Activated T-helper 2 cell treated with anti-CD3 and anti-CD28 coated beads, Interferon-gamma antibody, Interleukin-2, Interleukin-4, amounts not matched to agents 10 μg/mL and 5 μg/mL and 100 μg/mL, durations not matched to agents 14 hours and 24 hours and 36 hours (primary cell): ENCODE measurements at regions of chr16 and their contacts with region 1.

Region 1: DNA sequence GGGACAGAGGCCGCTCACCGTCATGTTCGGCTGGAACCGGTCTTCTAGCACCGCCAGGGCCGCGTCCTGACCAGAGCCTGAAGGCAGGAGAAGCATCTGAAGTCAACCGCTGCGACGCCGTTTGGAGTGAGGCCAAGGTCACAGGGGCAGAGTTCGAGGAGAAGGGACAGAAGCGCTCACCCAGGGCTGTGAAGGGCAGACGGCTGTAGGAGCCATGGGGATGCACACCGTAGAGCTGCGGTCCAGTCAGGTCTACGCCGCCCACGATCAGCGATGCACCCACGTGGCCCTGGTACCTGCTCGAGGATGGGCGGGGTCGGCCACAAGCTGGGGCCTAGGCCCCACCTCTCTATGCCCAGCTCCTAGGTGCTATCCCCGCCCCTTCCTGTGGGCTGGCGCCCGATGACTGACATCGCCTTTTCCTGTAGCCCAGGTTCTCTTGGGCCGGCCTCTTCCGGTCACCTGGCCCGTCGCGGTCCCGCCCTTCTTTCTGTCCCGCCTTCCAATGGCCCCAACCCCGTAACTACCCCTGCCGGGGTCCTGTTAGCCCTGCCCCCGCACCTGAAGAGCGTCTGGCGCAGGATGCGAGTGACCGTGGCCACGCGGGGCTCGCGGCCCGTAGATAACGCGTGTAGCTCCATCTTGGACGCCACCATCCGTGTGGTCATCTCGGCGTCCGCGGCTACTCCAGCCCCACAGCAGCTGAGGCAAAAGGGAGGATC is 1.1 kb downstream of the PSMB10 start:
- DNase-seq: peak; percentile 92
- H3K4me3 Mint-ChIP-seq: peak overlapping the region; percentile 100
- H3K27ac Mint-ChIP-seq: peak overlapping the region; percentile 90
- H3K4me1 Mint-ChIP-seq: peaks cover 26% of the 10 kb centered on the region
- H3K27me3 Mint-ChIP-seq: no peaks in the 10 kb centered on the region

Region 2: DNA sequence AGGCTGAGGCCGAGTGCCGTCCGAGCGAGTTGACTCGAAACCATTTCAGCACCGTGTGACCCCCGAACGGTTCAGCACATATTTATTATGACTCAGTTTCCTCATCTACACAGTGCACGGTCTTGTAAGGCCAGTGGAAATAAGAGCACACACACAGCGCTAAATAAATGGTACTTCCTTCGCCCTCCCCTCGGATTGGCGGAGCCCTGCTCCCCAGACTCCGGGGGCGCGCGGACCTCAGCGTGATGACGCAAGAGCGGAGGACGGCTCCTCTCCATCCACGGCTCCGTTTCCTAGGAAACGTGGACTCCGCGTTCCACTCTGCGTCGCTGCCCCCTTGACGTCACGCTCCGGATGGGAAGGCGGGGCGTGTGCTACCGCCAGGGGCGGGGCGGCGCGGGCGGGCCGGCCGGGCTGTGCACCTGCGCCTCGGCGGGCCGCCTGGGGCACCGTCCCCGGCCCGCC is 275.0 kb before region 1 on chr16 and contains the start of gene PARD6A:
- intact Hi-C with region 1: loop called (anchors 1 kb)
- DNase-seq: peak; percentile 95
- H3K4me3 Mint-ChIP-seq: peak within 1 kb of the TSS; percentile 92
- H3K27ac Mint-ChIP-seq: peak within 1 kb of the TSS; percentile 96
- H3K4me1 Mint-ChIP-seq: peaks cover 15% of the 10 kb centered on the region
- H3K27me3 Mint-ChIP-seq: no peaks in the 10 kb centered on the region
- total RNA-seq, gene PARD6A: 10.7 and 11.5 TPM in 2 replicates

Region 3: GRCh38 chr16:67872786-67873537 is 62.6 kb before region 1 on chr16 and contains the start of gene EDC4:
- intact Hi-C with region 1: loop called (anchors 2 kb)
- DNase-seq: peak; percentile 85
- H3K4me3 Mint-ChIP-seq: peak within 1 kb of the TSS; percentile 83
- H3K27ac Mint-ChIP-seq: peak within 1 kb of the TSS; percentile 89
- H3K4me1 Mint-ChIP-seq: peaks cover 21% of the 10 kb centered on the region
- H3K27me3 Mint-ChIP-seq: no peaks in the 10 kb centered on the region
- total RNA-seq, gene EDC4: 102 and 105 TPM in 2 replicates

Region 4: DNA sequence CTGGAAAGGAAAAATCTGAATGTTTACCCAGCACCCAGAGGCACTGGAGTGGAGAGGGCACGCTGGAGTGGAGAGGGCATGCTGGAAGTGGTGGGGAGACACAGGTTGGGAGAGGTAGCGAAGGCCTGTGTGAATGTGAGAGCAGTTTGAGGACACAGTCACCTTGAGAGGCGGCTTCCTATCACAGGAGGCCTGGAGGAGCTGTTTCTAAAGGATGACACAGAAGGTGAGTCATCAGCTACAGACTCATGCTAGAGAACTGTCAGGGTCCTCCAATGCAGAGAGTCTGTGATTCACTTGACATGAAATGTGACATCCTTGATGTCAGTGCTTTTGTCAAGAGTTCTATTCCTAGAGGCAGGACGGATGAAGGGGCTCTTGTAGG is 17.7 kb before region 1 on chr16:
- intact Hi-C with region 1: no loop called
- DNase-seq: no peak
- H3K4me3 Mint-ChIP-seq: no peak overlapping the region
- H3K27ac Mint-ChIP-seq: peak overlapping the region; percentile 83
- H3K4me1 Mint-ChIP-seq: peaks cover 24% of the 10 kb centered on the region
- H3K27me3 Mint-ChIP-seq: no peaks in the 10 kb centered on the region

Region 5: GRCh38 chr16:67968400-67969253 is 33.1 kb after region 1 on chr16 and contains the start of gene SLC12A4:
- intact Hi-C with region 1: loop called (anchors 1 kb)
- DNase-seq: peak; percentile 86
- H3K4me3 Mint-ChIP-seq: peak within 1 kb of the TSS; percentile 100
- H3K27ac Mint-ChIP-seq: peak within 1 kb of the TSS; percentile 88
- H3K4me1 Mint-ChIP-seq: peaks cover 27% of the 10 kb centered on the region
- H3K27me3 Mint-ChIP-seq: no peaks in the 10 kb centered on the region
- total RNA-seq, gene SLC12A4: 46.2 and 47.1 TPM in 2 replicates

Region 6: GRCh38 chr16:68022704-68023522 is 87.3 kb after region 1 on chr16 and contains the starts of genes DDX28 and DUS2:
- intact Hi-C with region 1: loop called (anchors 5 kb)
- DNase-seq: peak; percentile 93
- H3K4me3 Mint-ChIP-seq: peak within 1 kb of the TSS; percentile 96
- H3K27ac Mint-ChIP-seq: peak within 1 kb of the TSS; percentile 100
- H3K4me1 Mint-ChIP-seq: peaks cover 17% of the 10 kb centered on the region
- H3K27me3 Mint-ChIP-seq: no peaks in the 10 kb centered on the region
- total RNA-seq, gene DDX28: 19.3 TPM in 2 replicates
- total RNA-seq, gene DUS2: 31.2 and 34.3 TPM in 2 replicates

Region 7: GRCh38 chr16:68062910-68063393 is 127.4 kb after region 1 on chr16:
- intact Hi-C with region 1: no loop called
- DNase-seq: no peak
- H3K4me3 Mint-ChIP-seq: peak overlapping the region; percentile 6
- H3K27ac Mint-ChIP-seq: peak overlapping the region; percentile 77
- H3K4me1 Mint-ChIP-seq: peaks cover 70% of the 10 kb centered on the region
- H3K27me3 Mint-ChIP-seq: no peaks in the 10 kb centered on the region